ENCODE measurements at regions of chrX and their contacts with region 1.

Region 1: GRCh38 chrX:65667503-65668376 is at the start of gene MSN:
- DNase-seq: peak in 1 of 2 experiments; percentile 76
- H3K4me3 ChIP-seq: peak within 1 kb of the TSS; percentile 79
- H3K27ac ChIP-seq: peak within 1 kb of the TSS; percentile 97
- H3K4me1 ChIP-seq: peaks cover 11% of the 10 kb centered on the region
- H3K27me3 ChIP-seq: no peaks in the 10 kb centered on the region
- CTCF ChIP-seq: no peak
- total RNA-seq, gene MSN: 177 and 235 TPM in 2 replicates

Region 2: GRCh38 chrX:65706041-65706828 is 38.5 kb after region 1 on chrX:
- CTCF ChIA-PET with region 1: interaction called, 3 read pairs
- POLR2A ChIA-PET with region 1: interaction called, 3 read pairs
- intact Hi-C with region 1: loop called (anchors 1 kb)
- DNase-seq: peak; percentile 61 to 63
- H3K4me3 ChIP-seq: no peak overlapping the region
- H3K27ac ChIP-seq: peak overlapping the region; percentile 29
- H3K4me1 ChIP-seq: peaks cover 21% of the 10 kb centered on the region
- H3K27me3 ChIP-seq: no peaks in the 10 kb centered on the region
- CTCF ChIP-seq: no peak

Region 3: DNA sequence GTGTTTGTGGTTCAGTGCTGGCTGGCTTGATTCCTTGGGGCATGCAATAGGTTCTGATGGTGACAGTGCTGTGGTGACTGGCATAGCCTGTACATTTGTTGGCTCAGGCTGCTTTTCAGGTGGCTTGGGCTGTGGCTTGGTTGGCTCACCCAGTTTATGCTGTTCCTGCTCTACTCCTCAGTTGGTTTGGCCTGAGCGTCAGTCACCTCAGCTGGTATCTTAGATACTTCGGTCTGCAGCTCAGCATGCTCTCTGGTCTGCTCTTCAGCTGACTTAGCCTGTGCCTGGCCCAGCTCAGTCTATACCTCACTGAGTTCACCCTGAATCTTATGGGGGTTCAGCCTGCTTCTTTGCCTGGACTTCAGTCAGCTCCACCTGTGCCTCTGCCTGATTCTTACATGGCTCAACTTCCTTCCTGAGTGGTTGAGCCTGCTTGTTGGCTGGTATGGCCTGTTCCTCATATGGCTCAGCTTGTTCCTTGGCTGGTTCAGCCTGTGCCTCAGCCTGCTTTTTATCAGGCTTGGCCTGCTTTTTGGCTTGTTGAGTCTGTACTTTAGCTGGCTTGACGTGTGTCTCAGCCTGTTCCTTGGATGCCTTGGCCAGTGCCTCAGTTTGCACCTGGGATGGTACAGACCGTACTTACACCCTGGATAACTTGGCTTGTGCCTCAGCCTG is 170.3 kb after region 1 on chrX:
- CTCF ChIA-PET with region 1: no interaction called
- POLR2A ChIA-PET with region 1: no interaction called
- intact Hi-C with region 1: no loop called
- DNase-seq: no peak
- H3K4me3 ChIP-seq: no peak overlapping the region
- H3K27ac ChIP-seq: no peak overlapping the region
- H3K4me1 ChIP-seq: peaks cover 5% of the 10 kb centered on the region; the same call in 1 of the 2 replicates
- H3K27me3 ChIP-seq: no peaks in the 10 kb centered on the region
- CTCF ChIP-seq: no peak